SK-N-SH (cell line): ENCODE measurements at regions of chr3 and their contacts with region 1.

Region 1: GRCh38 chr3:11236595-11237461 is 35.4 kb upstream of the ATG7 start:
- DNase-seq: peak; percentile 70
- H3K4me3 ChIP-seq: no peak overlapping the region; a peak in 1 of 4 replicates
- H3K27ac ChIP-seq: peak overlapping the region; percentile 64 to 98
- H3K4me1 ChIP-seq: peaks cover 0 to 10% of the 10 kb centered on the region in 2 experiments; a peak in 3 of 4 replicates
- H3K27me3 ChIP-seq: no peaks in the 10 kb centered on the region
- CTCF ChIP-seq: peak; percentile 80
- EP300 ChIP-seq: no peak
- RAD21 ChIP-seq: peak; percentile 66

Region 2: GRCh38 chr3:11201246-11202024 is 35.4 kb before region 1 on chr3:
- CTCF ChIA-PET with region 1: interaction called, 11 read pairs
- POLR2A ChIA-PET with region 1: no interaction called
- DNase-seq: no peak
- H3K4me3 ChIP-seq: no peak overlapping the region
- H3K27ac ChIP-seq: peak overlapping the region; percentile 73 to 94
- H3K4me1 ChIP-seq: peaks cover 29 to 36% of the 10 kb centered on the region in 2 experiments
- H3K27me3 ChIP-seq: no peaks in the 10 kb centered on the region
- CTCF ChIP-seq: no peak
- EP300 ChIP-seq: peak in 1 of 2 experiments; percentile 70; a peak in 2 of 4 replicates
- RAD21 ChIP-seq: no peak